ENCODE measurements at regions of chr1 and their contacts with region 1.

Region 1: GRCh38 chr1:2004856-2005255 is 1.3 kb upstream of the CFAP74 start:
- DNase-seq: no peak
- ATAC-seq: no peak
- H3K4me3 ChIP-seq: no peak overlapping the region
- H3K27ac ChIP-seq: no peak overlapping the region
- H3K4me1 ChIP-seq: peaks cover 6% of the 10 kb centered on the region
- H3K27me3 ChIP-seq: no peaks in the 10 kb centered on the region
- CTCF ChIP-seq: no peak

Region 2: DNA sequence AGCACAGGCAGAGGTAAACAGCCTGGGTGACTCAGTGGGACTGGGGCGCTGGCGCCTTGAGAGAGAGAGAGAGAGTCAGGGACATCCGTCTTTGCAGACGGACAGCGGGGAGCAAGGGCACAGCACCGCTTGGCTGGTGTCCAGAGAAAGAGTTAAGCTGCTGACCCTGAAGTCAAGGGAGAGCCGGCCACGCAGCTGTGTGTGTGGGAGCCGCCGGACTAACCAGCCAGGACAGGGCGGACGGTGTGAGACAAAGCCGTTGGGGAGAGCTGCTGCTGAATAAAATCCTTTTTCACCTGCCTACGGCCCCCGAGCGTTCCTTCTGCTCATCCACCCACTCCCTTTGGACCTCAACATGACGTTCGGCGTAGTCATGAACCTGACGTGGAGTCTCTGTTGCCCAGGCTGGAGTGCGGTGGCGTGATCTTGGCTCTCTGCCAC is 15.7 kb before region 1 on chr1:
- CTCF ChIA-PET with region 1: interaction called, 15 read pairs
- POLR2A ChIA-PET with region 1: no interaction called
- intact Hi-C with region 1: no loop called
- DNase-seq: no peak
- ATAC-seq: no peak
- H3K4me3 ChIP-seq: no peak overlapping the region
- H3K27ac ChIP-seq: no peak overlapping the region
- H3K4me1 ChIP-seq: no peaks in the 10 kb centered on the region
- H3K27me3 ChIP-seq: no peaks in the 10 kb centered on the region
- CTCF ChIP-seq: no peak

Region 3: DNA sequence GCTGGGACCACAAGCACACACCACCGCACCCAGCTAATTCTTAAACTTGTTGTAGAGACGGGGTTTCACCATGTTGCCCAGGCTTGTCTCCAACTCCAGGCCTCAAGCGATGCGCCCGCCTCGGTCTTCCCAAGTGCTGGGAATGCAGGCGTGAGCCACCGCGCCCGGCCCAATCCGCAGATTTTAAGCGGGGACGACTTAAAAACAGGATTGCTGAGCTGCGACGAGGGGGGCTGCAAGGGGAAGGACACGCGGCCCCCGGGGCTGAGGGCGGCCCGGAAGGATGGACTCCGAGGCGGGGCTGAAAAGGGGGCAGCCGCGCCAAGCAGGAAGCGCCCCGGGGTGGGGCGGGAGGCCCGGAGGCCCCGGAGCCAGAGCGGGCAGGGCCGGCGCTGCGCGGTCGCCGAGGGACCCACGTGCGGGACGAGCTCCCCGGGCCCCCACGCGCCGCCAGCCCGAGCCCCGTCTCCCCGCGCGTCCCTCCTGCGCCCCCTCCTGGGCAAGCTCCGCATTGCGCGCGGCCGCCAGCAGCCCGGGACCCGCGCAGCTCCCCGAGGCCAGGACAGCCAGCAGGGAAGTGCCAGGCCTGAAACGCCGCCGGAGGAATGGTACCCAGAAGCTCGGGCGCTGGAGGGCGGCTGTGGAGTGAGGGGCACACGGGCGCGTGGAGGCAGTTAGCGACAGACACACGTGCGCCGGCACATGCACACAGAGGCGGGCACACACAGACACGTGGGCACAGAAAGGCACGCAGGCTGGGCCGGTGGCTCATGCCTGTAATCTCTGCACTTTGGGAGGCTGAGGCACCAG is 39.9 kb after region 1 on chr1:
- CTCF ChIA-PET with region 1: no interaction called
- POLR2A ChIA-PET with region 1: no interaction called
- intact Hi-C with region 1: no loop called
- DNase-seq: peak; percentile 85
- ATAC-seq: peak; percentile 54
- H3K4me3 ChIP-seq: peak overlapping the region; percentile 53
- H3K27ac ChIP-seq: no peak overlapping the region
- H3K4me1 ChIP-seq: peaks cover 18% of the 10 kb centered on the region
- H3K27me3 ChIP-seq: no peaks in the 10 kb centered on the region
- CTCF ChIP-seq: peak; percentile 80

Region 4: DNA sequence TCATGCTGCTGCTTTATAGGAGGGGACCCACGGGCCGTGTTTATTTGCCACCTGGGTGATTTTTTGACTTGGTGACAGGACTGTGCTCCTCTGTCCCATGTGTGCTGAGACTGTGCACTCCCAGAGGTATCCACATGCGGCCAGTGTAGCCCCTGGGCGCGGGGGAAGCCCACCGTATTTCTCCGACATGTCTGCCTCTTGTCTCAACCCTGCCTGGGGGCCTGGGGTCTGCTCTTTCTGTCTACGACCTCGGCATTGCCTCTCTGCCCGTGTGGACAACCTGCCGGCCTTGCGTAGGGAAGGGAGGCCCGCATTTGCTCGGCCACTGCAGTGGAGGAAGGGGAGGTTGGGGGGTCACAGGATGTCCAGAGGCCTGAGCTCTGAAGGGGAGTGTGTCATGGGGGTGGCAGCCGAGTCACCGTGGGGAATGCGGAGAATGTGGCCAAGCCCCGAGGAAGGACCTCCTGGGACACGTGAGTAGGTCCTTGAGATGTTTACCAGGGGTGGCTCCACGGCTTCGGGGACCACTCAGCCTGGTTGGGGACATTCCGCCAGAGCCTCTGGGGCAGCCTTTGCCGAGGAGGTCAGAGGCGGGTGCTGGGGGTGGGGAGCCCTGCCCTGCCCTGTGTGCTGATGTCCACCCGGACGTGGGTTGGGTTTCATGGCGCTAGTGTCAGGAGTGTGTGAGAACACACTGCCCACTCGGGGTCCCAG is 56.4 kb after region 1 on chr1:
- CTCF ChIA-PET with region 1: no interaction called
- POLR2A ChIA-PET with region 1: no interaction called
- intact Hi-C with region 1: no loop called
- DNase-seq: no peak
- ATAC-seq: no peak; the same call in 1 of the 2 replicates
- H3K4me3 ChIP-seq: no peak overlapping the region
- H3K27ac ChIP-seq: no peak overlapping the region
- H3K4me1 ChIP-seq: no peaks in the 10 kb centered on the region
- H3K27me3 ChIP-seq: no peaks in the 10 kb centered on the region
- CTCF ChIP-seq: no peak